ENCODE measurements at regions of chr15 and their contacts with region 1.

Region 1: DNA sequence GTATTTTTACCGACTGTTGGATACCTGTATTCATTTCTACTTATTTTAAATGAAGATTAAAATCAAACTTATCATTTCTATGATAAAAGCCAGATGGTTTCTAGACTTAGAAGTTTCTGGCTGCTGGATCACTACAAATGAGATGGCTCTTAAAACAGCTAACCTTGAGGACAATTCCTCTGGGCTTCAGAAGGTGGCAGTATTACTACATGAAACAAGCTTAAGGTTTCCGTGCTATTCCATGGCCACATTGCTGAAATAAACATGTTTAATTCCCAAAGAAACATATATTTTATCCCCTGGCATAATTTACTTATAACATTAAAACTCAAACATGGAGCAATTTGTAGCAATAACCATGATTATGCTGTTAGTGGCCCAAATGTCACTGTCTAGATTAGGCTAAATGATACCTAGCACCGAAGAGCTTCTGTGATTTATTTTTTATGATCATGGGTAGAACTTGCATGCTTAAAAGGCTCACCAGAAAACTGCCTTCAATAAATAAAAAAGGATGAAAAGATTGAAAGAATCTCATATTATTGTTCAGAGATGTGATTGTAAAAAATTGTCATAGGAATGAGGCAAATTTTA is 204.0 kb upstream of the NANOGP8 start:
- DNase-seq: no peak
- H3K4me3 ChIP-seq: no peak overlapping the region
- H3K27ac ChIP-seq: no peak overlapping the region
- H3K4me1 ChIP-seq: peaks cover 0 to 43% (median 21%) of the 10 kb centered on the region in 4 donors
- H3K27me3 ChIP-seq: no peaks in the 10 kb centered on the region
- CTCF ChIP-seq: peak; percentile 60 to 81 (median 66)
- EP300 ChIP-seq: no peak
- POLR2A ChIP-seq: no peak

Region 2: GRCh38 chr15:35078221-35078915 is 210.8 kb before region 1 on chr15:
- intact Hi-C with region 1: loop called (anchors 5 kb)
- DNase-seq: no peak
- H3K4me3 ChIP-seq: no peak overlapping the region
- H3K27ac ChIP-seq: no peak overlapping the region
- H3K4me1 ChIP-seq: peaks cover 0 to 16% (median 6%) of the 10 kb centered on the region in 4 donors
- H3K27me3 ChIP-seq: no peaks in the 10 kb centered on the region
- CTCF ChIP-seq: peak; percentile 35 to 80 (median 66)
- EP300 ChIP-seq: no peak
- POLR2A ChIP-seq: no peak

Region 3: GRCh38 chr15:35089551-35089950 is 199.6 kb before region 1 on chr15:
- intact Hi-C with region 1: no loop called
- DNase-seq: no peak
- H3K4me3 ChIP-seq: no peak overlapping the region
- H3K27ac ChIP-seq: no peak overlapping the region
- H3K4me1 ChIP-seq: no peaks in the 10 kb centered on the region
- H3K27me3 ChIP-seq: no peaks in the 10 kb centered on the region
- CTCF ChIP-seq: no peak
- EP300 ChIP-seq: no peak
- POLR2A ChIP-seq: no peak

Region 4: GRCh38 chr15:35181538-35181937 is 107.6 kb before region 1 on chr15:
- intact Hi-C with region 1: no loop called
- DNase-seq: no peak
- H3K4me3 ChIP-seq: no peak overlapping the region
- H3K27ac ChIP-seq: no peak overlapping the region
- H3K4me1 ChIP-seq: peaks cover 0 to 11% (median under 1%) of the 10 kb centered on the region in 4 donors
- H3K27me3 ChIP-seq: no peaks in the 10 kb centered on the region
- CTCF ChIP-seq: no peak
- EP300 ChIP-seq: no peak
- POLR2A ChIP-seq: no peak

Region 5: DNA sequence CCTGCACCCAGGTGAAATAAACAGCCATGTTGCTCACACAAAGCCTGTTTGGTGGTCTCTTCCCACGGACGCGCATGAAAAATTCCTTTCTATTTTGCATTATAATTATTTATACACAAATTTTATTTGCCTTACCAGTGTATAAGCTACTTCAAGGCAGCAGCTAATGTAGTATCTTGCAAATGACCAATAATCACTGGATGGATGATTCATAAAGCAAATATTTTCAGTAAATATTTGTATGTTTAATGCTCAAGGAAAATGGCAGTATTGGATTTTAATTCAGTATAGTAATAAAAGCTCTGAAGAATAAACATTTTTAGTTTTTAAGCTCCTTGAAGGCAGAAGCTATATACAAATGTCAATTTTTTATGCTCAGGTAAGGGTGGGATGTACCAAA is 45.4 kb before region 1 on chr15:
- intact Hi-C with region 1: no loop called
- DNase-seq: no peak
- H3K4me3 ChIP-seq: no peak overlapping the region
- H3K27ac ChIP-seq: no peak overlapping the region
- H3K4me1 ChIP-seq: no peaks in the 10 kb centered on the region
- H3K27me3 ChIP-seq: no peaks in the 10 kb centered on the region
- CTCF ChIP-seq: no peak
- EP300 ChIP-seq: no peak
- POLR2A ChIP-seq: no peak

Region 6: DNA sequence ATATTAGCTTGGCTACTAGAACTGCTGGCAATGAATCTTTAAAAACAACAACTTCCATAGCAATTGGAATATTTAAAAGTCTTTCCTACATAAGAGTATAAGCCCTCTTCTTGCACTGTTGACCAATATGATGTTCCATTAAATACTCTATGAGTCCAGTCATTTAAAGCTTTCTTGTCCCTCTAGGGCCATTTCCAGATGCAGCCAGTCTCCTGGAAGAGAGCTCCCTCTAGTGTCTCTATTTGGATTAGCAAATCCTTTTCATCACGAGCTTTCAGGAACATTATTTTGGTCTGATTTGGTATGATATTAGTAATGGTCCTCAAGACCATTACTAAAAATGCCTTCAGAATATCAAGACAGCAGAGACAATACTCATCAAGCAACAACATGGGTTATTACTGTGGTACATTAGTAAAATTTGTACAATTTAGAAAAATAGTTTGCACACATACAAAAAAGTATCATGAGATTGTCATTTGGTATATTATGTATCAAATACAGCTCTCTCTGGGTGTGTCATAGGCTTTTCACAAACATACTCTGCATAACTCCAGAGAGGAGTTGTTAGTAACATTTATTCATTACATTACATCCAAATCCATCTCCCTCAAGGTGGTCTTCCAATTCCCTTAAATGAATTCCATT is 155.6 kb after region 1 on chr15:
- intact Hi-C with region 1: loop called (anchors 2 kb)
- DNase-seq: no peak
- H3K4me3 ChIP-seq: no peak overlapping the region
- H3K27ac ChIP-seq: no peak overlapping the region
- H3K4me1 ChIP-seq: peaks cover 0 to 14% (median 9%) of the 10 kb centered on the region in 4 donors
- H3K27me3 ChIP-seq: no peaks in the 10 kb centered on the region
- CTCF ChIP-seq: peak; percentile 54 to 77 (median 66)
- EP300 ChIP-seq: no peak
- POLR2A ChIP-seq: no peak